Body of pancreas (tissue), 4 donors: ENCODE measurements at regions of chr19 and their contacts with region 1.

Region 1: DNA sequence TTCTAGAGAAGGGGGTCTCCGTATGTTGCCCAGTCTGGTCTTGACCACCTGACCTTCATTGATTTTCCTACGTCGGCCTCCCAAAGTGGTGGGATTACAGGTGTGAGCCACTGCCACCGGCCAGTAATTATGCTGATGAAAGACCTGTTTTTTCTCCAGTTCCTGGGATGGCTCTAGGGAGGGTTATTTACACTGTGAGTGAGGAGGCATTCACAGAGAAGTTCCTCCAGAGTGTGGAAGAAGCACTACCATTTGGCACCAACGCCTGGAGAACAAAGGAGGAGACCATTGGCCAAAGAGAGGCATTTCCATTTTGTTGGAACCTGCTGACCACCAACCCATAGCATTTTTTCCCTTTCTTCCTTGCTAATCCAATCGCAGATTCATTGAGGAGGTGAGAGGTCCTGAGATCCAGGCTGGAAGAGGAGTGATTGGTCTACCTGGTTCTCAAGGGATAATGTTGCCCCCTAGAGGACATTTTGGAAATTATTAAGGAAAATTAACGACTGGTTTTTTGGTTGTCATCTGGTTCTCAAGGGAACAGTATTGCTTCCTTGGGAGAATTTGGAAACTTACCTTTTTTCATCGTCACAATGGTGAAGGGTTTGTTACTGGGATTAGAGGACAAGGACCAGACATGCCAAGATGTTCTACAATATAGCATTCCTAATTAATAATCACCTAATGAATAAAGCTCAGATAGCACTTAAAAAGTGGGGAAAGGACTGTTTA is 5.5 kb upstream of the SAE1 start:
- DNase-seq: peak; percentile 27 to 57 (median 44)
- ATAC-seq: peak; percentile 88
- H3K4me3 ChIP-seq: no peak overlapping the region
- H3K27ac ChIP-seq: no peak overlapping the region
- H3K4me1 ChIP-seq: peaks cover 7% of the 10 kb centered on the region
- H3K27me3 ChIP-seq: no peaks in the 10 kb centered on the region
- CTCF ChIP-seq: peak; percentile 45 to 89 (median 84)
- POLR2A ChIP-seq: no peak

Region 2: GRCh38 chr19:47075179-47075810 is 49.8 kb before region 1 on chr19:
- intact Hi-C with region 1: loop called (anchors 5 kb)
- DNase-seq: no peak
- ATAC-seq: no peak
- H3K4me3 ChIP-seq: no peak overlapping the region
- H3K27ac ChIP-seq: no peak overlapping the region
- H3K4me1 ChIP-seq: peaks cover 8% of the 10 kb centered on the region
- H3K27me3 ChIP-seq: no peaks in the 10 kb centered on the region
- CTCF ChIP-seq: no peak
- POLR2A ChIP-seq: no peak